HepG2 (cell line): ENCODE measurements at regions of chr18 and their contacts with region 1.

Region 1: GRCh38 chr18:27599202-27599829 is 414.2 kb upstream of the CHST9 start:
- DNase-seq: peak; percentile 40
- ATAC-seq: peak; percentile 75
- H3K4me3 ChIP-seq: no peak overlapping the region
- H3K27ac ChIP-seq: no peak overlapping the region
- H3K4me1 ChIP-seq: no peaks in the 10 kb centered on the region
- H3K27me3 ChIP-seq: no peaks in the 10 kb centered on the region
- CTCF ChIP-seq: peak; percentile 84
- EP300 ChIP-seq: no peak
- POLR2A ChIP-seq: no peak
- RAD21 ChIP-seq: peak; percentile 47; the same call in 1 of the 2 replicates

Region 2: GRCh38 chr18:27017901-27018500 is 581.3 kb before region 1 on chr18:
- CTCF ChIA-PET with region 1: interaction called, 5 read pairs
- POLR2A ChIA-PET with region 1: no interaction called
- in situ Hi-C with region 1: no loop called
- intact Hi-C with region 1: loop called (anchors 1 kb)
- DNase-seq: peak; percentile 19
- ATAC-seq: peak; percentile 52; the same call in 2 of the 3 replicates
- H3K4me3 ChIP-seq: no peak overlapping the region
- H3K27ac ChIP-seq: no peak overlapping the region
- H3K4me1 ChIP-seq: peaks cover 12% of the 10 kb centered on the region
- H3K27me3 ChIP-seq: no peaks in the 10 kb centered on the region
- CTCF ChIP-seq: peak; percentile 65
- EP300 ChIP-seq: no peak
- POLR2A ChIP-seq: no peak
- RAD21 ChIP-seq: peak; percentile 64; the same call in 1 of the 2 replicates

Region 3: GRCh38 chr18:27355019-27355707 is 244.2 kb before region 1 on chr18:
- CTCF ChIA-PET with region 1: no interaction called
- POLR2A ChIA-PET with region 1: no interaction called
- in situ Hi-C with region 1: loop called (anchors 5 kb)
- intact Hi-C with region 1: no loop called
- DNase-seq: no peak
- ATAC-seq: no peak
- H3K4me3 ChIP-seq: no peak overlapping the region
- H3K27ac ChIP-seq: no peak overlapping the region
- H3K4me1 ChIP-seq: no peaks in the 10 kb centered on the region
- H3K27me3 ChIP-seq: no peaks in the 10 kb centered on the region
- CTCF ChIP-seq: no peak
- EP300 ChIP-seq: no peak
- POLR2A ChIP-seq: no peak
- RAD21 ChIP-seq: no peak

Region 4: DNA sequence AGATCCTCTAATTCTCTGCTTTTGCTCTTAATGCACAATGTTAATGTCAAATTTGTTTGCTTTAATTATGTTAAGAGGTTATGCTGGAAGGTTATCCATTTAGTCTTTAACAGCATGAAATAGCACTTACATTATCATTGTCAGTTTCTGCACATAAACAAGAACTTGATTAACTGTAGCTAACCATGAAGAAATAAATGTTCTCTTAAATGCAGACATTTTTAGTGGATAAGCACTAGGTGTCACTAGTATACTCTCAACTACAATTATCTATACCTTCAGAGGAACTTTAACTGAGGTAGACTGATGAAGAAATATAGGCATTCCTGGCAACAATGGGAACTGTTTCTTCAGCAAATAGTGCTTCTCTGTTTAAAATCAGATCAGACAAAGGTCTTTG is 235.4 kb before region 1 on chr18:
- CTCF ChIA-PET with region 1: interaction called, 10 read pairs
- POLR2A ChIA-PET with region 1: no interaction called
- in situ Hi-C with region 1: loop called (anchors 5 kb)
- intact Hi-C with region 1: loop called (anchors 1 kb)
- DNase-seq: peak; percentile 10
- ATAC-seq: peak; percentile 58; the same call in 2 of the 3 replicates
- H3K4me3 ChIP-seq: no peak overlapping the region
- H3K27ac ChIP-seq: no peak overlapping the region
- H3K4me1 ChIP-seq: no peaks in the 10 kb centered on the region
- H3K27me3 ChIP-seq: no peaks in the 10 kb centered on the region
- CTCF ChIP-seq: peak; percentile 41
- EP300 ChIP-seq: no peak
- POLR2A ChIP-seq: no peak
- RAD21 ChIP-seq: no peak

Region 5: GRCh38 chr18:27546996-27547395 is 52.3 kb before region 1 on chr18:
- CTCF ChIA-PET with region 1: no interaction called
- POLR2A ChIA-PET with region 1: no interaction called
- in situ Hi-C with region 1: no loop called
- intact Hi-C with region 1: no loop called
- DNase-seq: no peak
- ATAC-seq: no peak
- H3K4me3 ChIP-seq: no peak overlapping the region
- H3K27ac ChIP-seq: no peak overlapping the region
- H3K4me1 ChIP-seq: no peaks in the 10 kb centered on the region
- H3K27me3 ChIP-seq: no peaks in the 10 kb centered on the region
- CTCF ChIP-seq: no peak
- EP300 ChIP-seq: no peak
- POLR2A ChIP-seq: no peak
- RAD21 ChIP-seq: no peak